ENCODE measurements at regions of chr3 and their contacts with region 1.

Region 1: GRCh38 chr3:71583566-71584449 is at the start of gene FOXP1:
- DNase-seq: peak; percentile 79
- ATAC-seq: peak; percentile 49
- H3K4me3 Mint-ChIP-seq: peak within 1 kb of the TSS; percentile 91
- H3K27ac Mint-ChIP-seq: peak within 1 kb of the TSS; percentile 95
- H3K4me1 Mint-ChIP-seq: peaks cover 53% of the 10 kb centered on the region
- H3K27me3 Mint-ChIP-seq: no peaks in the 10 kb centered on the region
- total RNA-seq, gene FOXP1: 108 to 153 TPM

Region 2: DNA sequence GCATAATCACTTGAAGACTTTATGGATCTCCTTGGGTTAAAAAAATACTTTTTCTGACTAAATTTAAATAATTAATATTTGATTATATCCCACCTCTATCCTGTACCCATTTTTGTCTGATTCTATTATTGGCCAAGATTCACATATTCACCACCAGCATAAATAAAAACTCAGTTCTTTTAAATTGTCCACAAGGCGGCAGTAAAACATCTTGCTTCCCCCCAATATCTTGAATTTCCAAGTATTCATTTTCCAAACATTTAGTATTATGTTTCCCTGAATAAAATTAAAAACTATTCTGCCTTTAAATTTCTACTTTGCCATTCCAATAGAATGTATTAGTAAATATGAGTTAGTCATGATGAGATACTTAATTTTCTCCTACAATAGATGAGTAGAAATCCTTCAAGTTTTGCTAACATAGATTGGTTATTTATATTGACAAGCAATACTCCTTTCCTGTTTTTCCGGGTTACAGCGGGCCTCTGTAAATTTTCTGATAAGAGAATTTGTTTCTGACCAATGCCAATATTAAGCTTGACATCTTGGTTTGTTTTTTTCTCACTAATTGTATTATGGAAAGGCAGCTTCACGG is 1052.6 kb before region 1 on chr3:
- CTCF ChIA-PET with region 1: no interaction called
- POLR2A ChIA-PET with region 1: no interaction called
- intact Hi-C with region 1: loop called in 1 of 2 experiments (anchors 10 kb)
- DNase-seq: no peak
- ATAC-seq: no peak
- H3K4me3 Mint-ChIP-seq: no peak overlapping the region
- H3K27ac Mint-ChIP-seq: no peak overlapping the region
- H3K4me1 Mint-ChIP-seq: no peaks in the 10 kb centered on the region
- H3K27me3 Mint-ChIP-seq: peaks cover 4% of the 10 kb centered on the region

Region 3: GRCh38 chr3:70856414-70857162 is 727.2 kb before region 1 on chr3:
- CTCF ChIA-PET with region 1: no interaction called
- POLR2A ChIA-PET with region 1: no interaction called
- intact Hi-C with region 1: loop called in 1 of 2 experiments (anchors 5 kb)
- DNase-seq: peak; percentile 8
- ATAC-seq: peak; percentile 84
- H3K4me3 Mint-ChIP-seq: no peak overlapping the region
- H3K27ac Mint-ChIP-seq: no peak overlapping the region
- H3K4me1 Mint-ChIP-seq: peaks cover 24% of the 10 kb centered on the region
- H3K27me3 Mint-ChIP-seq: peaks cover 33% of the 10 kb centered on the region

Region 4: GRCh38 chr3:71130471-71131374 is 453.1 kb before region 1 on chr3:
- CTCF ChIA-PET with region 1: interaction called, 3 read pairs
- POLR2A ChIA-PET with region 1: no interaction called
- intact Hi-C with region 1: loop called (anchors 1 kb)
- DNase-seq: peak; percentile 82
- ATAC-seq: peak; percentile 61
- H3K4me3 Mint-ChIP-seq: peak overlapping the region; percentile 90
- H3K27ac Mint-ChIP-seq: peak overlapping the region; percentile 99
- H3K4me1 Mint-ChIP-seq: peaks cover 71% of the 10 kb centered on the region
- H3K27me3 Mint-ChIP-seq: no peaks in the 10 kb centered on the region

Region 5: GRCh38 chr3:71380096-71380495 is 203.7 kb before region 1 on chr3:
- CTCF ChIA-PET with region 1: no interaction called
- POLR2A ChIA-PET with region 1: no interaction called
- intact Hi-C with region 1: loop called in 1 of 2 experiments (anchors 5 kb)
- DNase-seq: no peak
- ATAC-seq: no peak
- H3K4me3 Mint-ChIP-seq: no peak overlapping the region
- H3K27ac Mint-ChIP-seq: peak overlapping the region; percentile 7
- H3K4me1 Mint-ChIP-seq: peaks cover 91% of the 10 kb centered on the region
- H3K27me3 Mint-ChIP-seq: no peaks in the 10 kb centered on the region

Region 6: DNA sequence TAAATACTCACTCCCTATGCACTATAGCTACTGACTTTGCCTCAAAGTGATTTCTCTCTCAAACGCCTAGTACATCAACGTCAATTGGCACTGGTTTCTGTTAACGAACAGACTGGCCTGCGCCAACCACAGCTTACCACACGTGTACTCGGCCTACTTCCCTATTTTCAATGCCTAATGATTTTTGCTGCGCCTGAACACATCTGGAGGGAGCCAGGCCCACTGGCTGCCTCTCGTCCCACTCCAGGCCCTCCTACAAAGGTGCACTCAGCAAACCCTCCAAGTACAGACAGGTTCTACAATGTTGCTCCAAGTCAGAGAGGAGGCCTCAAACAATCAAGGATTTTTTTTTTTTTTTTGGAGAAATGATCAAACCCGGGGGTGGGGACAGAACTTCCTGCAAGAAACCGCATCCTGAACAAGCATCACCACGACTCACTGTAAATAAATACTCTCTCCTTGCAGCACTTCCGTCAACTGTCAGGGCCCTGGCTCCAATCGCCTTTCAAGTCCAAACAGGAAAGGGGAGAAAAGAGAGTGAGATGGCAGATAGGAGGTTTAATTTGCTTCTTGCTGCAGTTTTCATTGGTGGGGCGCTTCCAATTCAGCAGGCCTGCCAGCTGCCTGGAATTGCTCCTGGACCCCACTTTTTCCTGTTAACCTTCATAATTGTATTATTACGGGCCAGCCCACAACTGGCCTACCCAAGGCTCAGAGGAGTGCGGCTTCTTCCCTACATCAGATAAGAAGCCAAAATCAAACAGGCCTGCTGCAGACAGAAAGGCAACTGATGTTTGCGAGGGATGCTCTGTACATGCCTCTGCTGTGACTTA is 139.6 kb before region 1 on chr3:
- CTCF ChIA-PET with region 1: interaction called, 3 read pairs
- POLR2A ChIA-PET with region 1: no interaction called
- intact Hi-C with region 1: loop called in 1 of 2 experiments (anchors 5 kb)
- DNase-seq: peak; percentile 76
- ATAC-seq: peak; percentile 59
- H3K4me3 Mint-ChIP-seq: peak overlapping the region; percentile 57
- H3K27ac Mint-ChIP-seq: peak overlapping the region; percentile 96
- H3K4me1 Mint-ChIP-seq: peaks cover 97% of the 10 kb centered on the region
- H3K27me3 Mint-ChIP-seq: no peaks in the 10 kb centered on the region

Region 7: GRCh38 chr3:71542521-71543370 is 41.1 kb before region 1 on chr3:
- CTCF ChIA-PET with region 1: interaction called, 5 read pairs
- POLR2A ChIA-PET with region 1: no interaction called
- intact Hi-C with region 1: loop called in 1 of 2 experiments (anchors 2 kb)
- DNase-seq: peak; percentile 56
- ATAC-seq: peak; percentile 45
- H3K4me3 Mint-ChIP-seq: no peak overlapping the region
- H3K27ac Mint-ChIP-seq: no peak overlapping the region
- H3K4me1 Mint-ChIP-seq: peaks cover 20% of the 10 kb centered on the region
- H3K27me3 Mint-ChIP-seq: peaks cover 10% of the 10 kb centered on the region